OCI-LY7 (cell line): ENCODE measurements at regions of chr7 and their contacts with region 1.

Region 1: DNA sequence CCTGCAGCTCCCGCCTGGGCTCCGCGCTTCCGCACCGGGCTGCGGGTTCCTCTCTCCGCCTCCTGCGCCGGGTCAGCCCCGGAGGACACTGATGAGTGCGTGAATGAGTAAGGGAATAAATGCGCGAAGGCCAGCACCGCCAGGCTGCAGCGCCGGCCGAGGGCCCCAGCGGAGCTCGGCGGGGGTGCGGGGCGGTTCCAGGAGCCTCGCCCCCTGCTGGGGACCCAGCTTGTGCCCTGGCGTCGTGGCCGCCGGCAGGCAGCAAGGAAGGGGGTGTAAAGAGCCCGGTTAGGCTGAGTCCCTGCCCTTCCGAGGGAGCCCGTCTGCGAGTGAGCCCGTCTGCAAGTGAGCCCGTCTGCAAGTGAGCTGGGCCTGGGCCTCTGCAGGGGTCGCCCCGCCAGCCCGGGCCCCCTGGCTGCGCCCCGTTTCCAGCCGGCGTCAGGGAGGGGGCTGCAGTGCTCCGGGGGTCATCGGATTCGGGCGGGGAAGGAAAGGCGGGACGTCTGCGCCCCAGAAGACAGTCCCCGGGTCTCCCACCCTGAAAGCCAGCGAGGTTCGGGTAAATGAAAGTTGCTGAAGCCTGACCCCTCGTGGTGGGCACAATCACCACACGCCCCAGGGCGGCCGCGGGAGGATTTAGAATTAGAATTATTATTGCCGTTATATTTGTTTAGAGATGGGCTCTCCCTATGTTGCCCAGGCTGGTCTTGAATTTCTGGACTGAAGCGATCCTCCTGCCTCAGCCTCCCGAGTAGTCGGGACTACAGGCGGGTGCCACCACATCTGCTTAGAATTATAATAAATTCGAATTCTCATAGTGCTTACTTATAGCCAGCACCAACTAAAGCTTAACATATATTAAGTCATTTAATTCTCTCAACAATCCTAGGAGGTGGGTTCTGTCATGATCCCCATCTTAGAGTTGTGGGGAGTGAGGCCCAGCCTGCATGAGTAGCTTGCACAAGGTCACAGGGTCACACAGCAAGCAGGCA is 8.6 kb upstream of the CRYGN start:
- DNase-seq: peak; percentile 68
- H3K4me3 ChIP-seq: peak overlapping the region; percentile 51
- H3K27ac ChIP-seq: no peak overlapping the region
- H3K4me1 ChIP-seq: no peaks in the 10 kb centered on the region
- CTCF ChIP-seq: peak; percentile 82

Region 2: GRCh38 chr7:151315038-151315655 is 133.4 kb before region 1 on chr7:
- CTCF ChIA-PET with region 1: no interaction called
- POLR2A ChIA-PET with region 1: no interaction called
- intact Hi-C with region 1: loop called (anchors 2 kb)
- DNase-seq: peak; percentile 82
- H3K4me3 ChIP-seq: no peak overlapping the region
- H3K27ac ChIP-seq: no peak overlapping the region
- H3K4me1 ChIP-seq: peaks cover 5% of the 10 kb centered on the region
- CTCF ChIP-seq: peak; percentile 88

Region 3: GRCh38 chr7:151368136-151368571 is 80.4 kb before region 1 on chr7:
- CTCF ChIA-PET with region 1: interaction called, 3 read pairs
- POLR2A ChIA-PET with region 1: interaction called, 3 read pairs
- intact Hi-C with region 1: loop called (anchors 1 kb)
- DNase-seq: peak; percentile 78
- H3K4me3 ChIP-seq: no peak overlapping the region
- H3K27ac ChIP-seq: no peak overlapping the region
- H3K4me1 ChIP-seq: peaks cover 3% of the 10 kb centered on the region
- CTCF ChIP-seq: peak; percentile 92